ENCODE measurements at regions of chr13 and their contacts with region 1.

Region 1: DNA sequence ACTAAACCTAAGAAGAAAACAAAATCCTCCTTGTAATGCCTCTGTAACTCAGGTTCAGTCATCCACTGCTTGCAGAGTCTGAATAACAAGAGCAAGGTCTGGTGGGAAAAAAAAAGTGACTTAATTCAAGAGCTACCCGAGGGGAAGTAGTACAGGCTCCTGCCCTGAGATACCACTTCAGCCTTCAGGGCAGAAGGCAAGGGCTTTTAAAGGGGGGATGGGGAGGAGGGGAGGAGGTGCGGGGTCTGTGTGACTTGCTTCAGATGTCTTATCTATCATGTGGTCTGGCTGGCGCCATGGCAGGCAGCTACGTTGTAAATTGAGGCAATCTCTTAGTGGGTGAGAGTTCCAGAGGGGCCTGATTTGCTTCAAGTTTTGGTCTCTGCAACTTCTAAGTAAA is 66.7 kb downstream of the LRRC63 start:
- DNase-seq: no peak
- ATAC-seq: peak; percentile 58; the same call in 2 of the 3 replicates
- H3K4me3 ChIP-seq: no peak overlapping the region
- H3K27ac ChIP-seq: no peak overlapping the region
- H3K4me1 ChIP-seq: no peaks in the 10 kb centered on the region
- H3K27me3 ChIP-seq: no peaks in the 10 kb centered on the region
- CTCF ChIP-seq: no peak
- EP300 ChIP-seq: no peak
- POLR2A ChIP-seq: no peak
- RAD21 ChIP-seq: no peak

Region 2: GRCh38 chr13:46224866-46225265 is 53.6 kb before region 1 on chr13:
- CTCF ChIA-PET with region 1: no interaction called
- POLR2A ChIA-PET with region 1: no interaction called
- RAD21 ChIA-PET with region 1: no interaction called
- SMC1A ChIA-PET with region 1: no interaction called
- in situ Hi-C with region 1: no loop called
- intact Hi-C with region 1: no loop called
- DNase-seq: no peak
- ATAC-seq: no peak; the same call in 2 of the 3 replicates
- H3K4me3 ChIP-seq: no peak overlapping the region
- H3K27ac ChIP-seq: no peak overlapping the region
- H3K4me1 ChIP-seq: no peaks in the 10 kb centered on the region
- H3K27me3 ChIP-seq: no peaks in the 10 kb centered on the region
- CTCF ChIP-seq: no peak
- EP300 ChIP-seq: no peak
- POLR2A ChIP-seq: no peak
- RAD21 ChIP-seq: no peak

Region 3: DNA sequence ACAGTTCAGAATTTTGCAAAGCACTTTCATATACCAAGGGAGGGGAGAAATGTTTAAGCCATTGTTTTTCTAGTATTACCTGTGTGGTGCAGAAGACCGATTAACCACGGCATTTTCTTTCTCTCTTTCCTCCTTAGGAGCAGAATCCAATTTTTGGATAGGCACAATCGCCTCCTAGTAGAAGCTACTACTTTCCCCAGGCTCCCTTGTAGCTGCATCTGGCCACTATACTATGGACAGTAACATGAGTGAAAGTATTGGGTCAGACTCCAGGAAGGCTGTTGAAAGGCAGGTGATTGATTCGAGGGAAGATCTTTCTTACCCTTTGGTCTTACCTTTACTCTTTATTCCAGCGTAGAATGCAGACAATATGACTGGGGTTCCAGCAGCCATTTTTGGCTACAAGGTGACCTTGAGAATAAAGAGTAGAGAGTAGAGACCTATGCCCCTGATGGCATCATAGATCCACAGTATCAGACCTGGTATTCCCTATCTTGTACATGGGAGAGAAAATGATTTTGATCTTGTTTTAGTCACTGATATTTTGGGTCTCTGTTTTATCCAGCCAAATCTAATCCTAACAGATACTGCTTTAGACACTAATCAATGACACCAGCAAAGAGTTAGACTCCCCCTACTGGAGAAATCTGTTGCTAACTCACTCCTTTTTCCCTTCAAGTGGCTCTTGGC is 10.2 kb after region 1 on chr13:
- CTCF ChIA-PET with region 1: interaction called, 57 read pairs
- POLR2A ChIA-PET with region 1: no interaction called
- RAD21 ChIA-PET with region 1: interaction called, 5 read pairs
- SMC1A ChIA-PET with region 1: interaction called, 7 read pairs
- in situ Hi-C with region 1: no loop called
- intact Hi-C with region 1: no loop called
- DNase-seq: peak; percentile 19
- ATAC-seq: peak; percentile 95
- H3K4me3 ChIP-seq: no peak overlapping the region
- H3K27ac ChIP-seq: no peak overlapping the region
- H3K4me1 ChIP-seq: no peaks in the 10 kb centered on the region
- H3K27me3 ChIP-seq: no peaks in the 10 kb centered on the region
- CTCF ChIP-seq: peak; percentile 78 to 84 (median 79)
- EP300 ChIP-seq: no peak
- POLR2A ChIP-seq: no peak
- RAD21 ChIP-seq: peak; percentile 93